ENCODE measurements at regions of chr3 and their contacts with region 1.

Region 1: GRCh38 chr3:56801662-56802377 is at the start of gene ARHGEF3:
- DNase-seq: peak; percentile 69 to 75 (median 75)
- H3K4me3 ChIP-seq: peak within 1 kb of the TSS; percentile 56 to 95 (median 93)
- H3K4me3 Mint-ChIP-seq: peak within 1 kb of the TSS; percentile 99 to 100
- H3K27ac ChIP-seq: peak within 1 kb of the TSS; percentile 36 to 85
- H3K27ac Mint-ChIP-seq: peak within 1 kb of the TSS; percentile 84 to 93 (median 88)
- H3K4me1 ChIP-seq: peaks cover 35 to 54% of the 10 kb centered on the region in 2 donors
- H3K4me1 Mint-ChIP-seq: peaks cover 41% of the 10 kb centered on the region
- H3K27me3 ChIP-seq: no peaks in the 10 kb centered on the region
- H3K27me3 Mint-ChIP-seq: peaks cover 0 to 2% (median 2%) of the 10 kb centered on the region in 3 donors
- CTCF ChIP-seq: peak; percentile 25
- polyA plus RNA-seq, gene ARHGEF3: 22.6 to 29.5 (median 26.5) TPM

Region 2: GRCh38 chr3:56682462-56683121 is 119.2 kb before region 1 on chr3:
- intact Hi-C with region 1: loop called in 1 of 2 experiments (anchors 5 kb)
- DNase-seq: peak; percentile 62 to 73 (median 67)
- H3K4me3 ChIP-seq: peak overlapping the region; percentile 58 to 92 (median 72)
- H3K4me3 Mint-ChIP-seq: peak overlapping the region; percentile 92 to 95
- H3K27ac ChIP-seq: peak overlapping the region; percentile 93 to 95
- H3K27ac Mint-ChIP-seq: peak overlapping the region; percentile 92 to 97 (median 96)
- H3K4me1 ChIP-seq: peaks cover 20 to 37% of the 10 kb centered on the region in 2 donors
- H3K4me1 Mint-ChIP-seq: peaks cover 34% of the 10 kb centered on the region
- H3K27me3 ChIP-seq: no peaks in the 10 kb centered on the region
- H3K27me3 Mint-ChIP-seq: peaks cover 0 to 3% (median 0%) of the 10 kb centered on the region in 3 donors
- CTCF ChIP-seq: no peak

Region 3: GRCh38 chr3:56702490-56703315 is 99.1 kb before region 1 on chr3:
- intact Hi-C with region 1: loop called (anchors 2 to 5 kb)
- DNase-seq: peak; percentile 54 to 73 (median 65)
- H3K4me3 ChIP-seq: no peak overlapping the region
- H3K4me3 Mint-ChIP-seq: no peak overlapping the region
- H3K27ac ChIP-seq: no peak overlapping the region
- H3K27ac Mint-ChIP-seq: peak overlapping the region in 1 of 7 donors; percentile 35
- H3K4me1 ChIP-seq: peaks cover 0 to 8% of the 10 kb centered on the region in 2 donors
- H3K4me1 Mint-ChIP-seq: peaks cover 21% of the 10 kb centered on the region
- H3K27me3 ChIP-seq: no peaks in the 10 kb centered on the region
- H3K27me3 Mint-ChIP-seq: peaks cover 0 to 1% (median 0%) of the 10 kb centered on the region in 3 donors
- CTCF ChIP-seq: peak; percentile 77

Region 4: DNA sequence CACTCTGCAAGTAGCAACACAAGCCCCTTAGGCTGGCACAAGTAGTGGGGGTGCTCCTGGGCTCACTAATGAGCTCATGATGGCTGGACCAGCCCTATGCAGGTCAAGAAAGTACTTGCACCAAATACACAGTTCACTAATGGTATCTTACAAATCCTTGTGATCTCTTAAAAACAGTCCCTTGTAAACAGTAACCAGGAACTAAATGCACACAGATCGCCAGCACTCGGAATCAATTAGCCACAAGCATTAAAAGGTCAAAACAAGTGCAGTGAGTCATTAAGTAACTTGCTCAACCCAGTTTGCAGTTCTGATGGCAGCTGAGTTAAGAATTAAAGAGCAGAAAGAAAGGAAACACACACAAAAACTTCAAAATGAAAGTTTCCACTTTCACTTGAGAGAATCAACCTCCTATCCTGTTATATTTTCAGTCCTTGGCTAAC is 43.3 kb before region 1 on chr3:
- intact Hi-C with region 1: loop called (anchors 2 to 5 kb)
- DNase-seq: peak; percentile 86 to 94 (median 87)
- H3K4me3 ChIP-seq: peak overlapping the region in 2 of 3 experiments; percentile 27 to 29
- H3K4me3 Mint-ChIP-seq: peak overlapping the region; percentile 34 to 61
- H3K27ac ChIP-seq: peak overlapping the region; percentile 67 to 89
- H3K27ac Mint-ChIP-seq: peak overlapping the region; percentile 95 to 98 (median 97)
- H3K4me1 ChIP-seq: peaks cover 58 to 62% of the 10 kb centered on the region in 2 donors
- H3K4me1 Mint-ChIP-seq: peaks cover 74% of the 10 kb centered on the region
- H3K27me3 ChIP-seq: no peaks in the 10 kb centered on the region
- H3K27me3 Mint-ChIP-seq: peaks cover 0 to 4% (median 0%) of the 10 kb centered on the region in 3 donors
- CTCF ChIP-seq: no peak

Region 5: DNA sequence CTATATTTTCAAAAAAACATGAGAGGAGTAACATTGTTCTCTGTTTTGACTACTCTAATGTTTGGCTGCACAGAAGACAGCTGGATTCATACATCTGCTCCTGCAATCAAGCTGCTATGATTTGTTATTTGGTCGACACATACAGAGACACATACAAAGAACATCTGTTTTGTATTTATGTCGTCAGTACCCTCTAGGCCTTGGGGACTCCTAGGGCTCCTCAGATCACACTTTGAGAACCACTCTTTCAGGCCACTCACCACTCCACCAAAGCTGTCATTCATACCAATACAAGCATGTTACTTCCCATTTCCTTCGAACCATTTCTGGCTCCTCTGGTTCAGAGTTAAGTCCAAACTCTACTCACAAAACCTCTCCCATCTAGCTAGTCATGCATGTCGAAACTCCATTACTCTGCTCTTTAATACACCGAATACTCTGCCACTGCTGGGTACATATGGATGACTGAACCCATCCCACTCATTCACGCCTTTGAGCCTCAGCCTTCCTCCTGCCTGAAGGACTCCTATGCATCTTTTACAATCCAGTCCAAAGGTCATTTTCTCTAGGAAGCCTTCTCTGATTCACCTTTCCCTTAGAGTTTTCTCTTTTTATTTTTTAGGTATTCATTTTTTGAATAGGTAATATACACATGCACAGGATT is 102.9 kb after region 1 on chr3:
- intact Hi-C with region 1: no loop called
- DNase-seq: no peak
- H3K4me3 ChIP-seq: no peak overlapping the region
- H3K4me3 Mint-ChIP-seq: no peak overlapping the region
- H3K27ac ChIP-seq: no peak overlapping the region
- H3K27ac Mint-ChIP-seq: peak overlapping the region in 1 of 7 donors; percentile 13
- H3K4me1 ChIP-seq: peaks cover 3 to 5% of the 10 kb centered on the region in 2 donors
- H3K4me1 Mint-ChIP-seq: peaks cover 5% of the 10 kb centered on the region
- H3K27me3 ChIP-seq: no peaks in the 10 kb centered on the region
- H3K27me3 Mint-ChIP-seq: peaks cover 0 to 2% (median 0%) of the 10 kb centered on the region in 3 donors
- CTCF ChIP-seq: no peak